HCT116 (cell line): ENCODE measurements at regions of chr20 and their contacts with region 1.

Region 1: GRCh38 chr20:33992923-33993575 is 662 bp upstream of the RALY start:
- DNase-seq: peak; percentile 95
- ATAC-seq: peak; percentile 82
- H3K4me3 ChIP-seq: peak overlapping the region; percentile 76 to 91
- H3K27ac ChIP-seq: peak overlapping the region; percentile 92
- H3K4me1 ChIP-seq: peaks cover 11 to 27% of the 10 kb centered on the region in 2 experiments
- H3K27me3 ChIP-seq: no peaks in the 10 kb centered on the region
- CTCF ChIP-seq: no peak
- POLR2A ChIP-seq: peak; percentile 87
- RAD21 ChIP-seq: no peak

Region 2: DNA sequence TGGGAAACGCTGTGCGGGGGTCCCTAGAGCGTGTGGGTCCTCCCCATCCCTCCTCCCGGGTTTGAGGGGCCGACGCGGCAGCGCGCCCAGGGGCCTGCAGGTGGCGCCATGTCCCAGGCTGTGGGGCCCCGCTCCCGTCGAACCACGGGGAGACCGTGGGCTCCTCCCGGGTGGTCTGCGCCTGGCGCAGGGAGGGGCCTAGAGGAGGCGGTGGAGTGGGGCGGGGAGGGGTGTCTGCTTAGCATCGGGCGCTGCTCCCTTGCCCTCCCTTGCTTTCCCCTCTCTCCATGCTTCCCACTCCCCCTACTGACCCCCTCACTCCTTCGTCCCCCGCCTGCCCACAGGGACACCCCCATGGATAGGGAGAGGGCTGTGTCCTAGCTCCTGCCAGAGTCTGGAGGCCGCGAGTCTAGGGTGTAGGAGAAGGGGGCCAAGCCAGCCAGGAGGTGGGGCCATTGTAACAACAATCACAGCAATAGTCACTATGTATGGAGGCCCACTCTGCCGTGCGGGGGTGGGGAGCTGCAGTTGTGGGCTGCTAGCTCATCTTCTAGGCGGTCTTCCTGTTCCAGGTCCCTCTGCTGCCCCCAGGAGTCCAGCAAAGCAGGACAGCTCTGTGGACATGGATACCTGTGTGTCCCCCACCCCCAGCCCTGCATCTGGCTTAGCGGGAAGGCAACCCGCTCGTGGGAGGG is 130.2 kb before region 1 on chr20:
- CTCF ChIA-PET with region 1: no interaction called
- POLR2A ChIA-PET with region 1: no interaction called
- RAD21 ChIA-PET with region 1: no interaction called
- intact Hi-C with region 1: loop called (anchors 1 kb)
- DNase-seq: no peak
- ATAC-seq: peak; percentile 84
- H3K4me3 ChIP-seq: no peak overlapping the region
- H3K27ac ChIP-seq: no peak overlapping the region
- H3K4me1 ChIP-seq: peaks cover 0 to 12% of the 10 kb centered on the region in 2 experiments; a peak in 1 of 4 replicates
- H3K27me3 ChIP-seq: no peaks in the 10 kb centered on the region
- CTCF ChIP-seq: peak; percentile 43 to 95 (median 82); a peak in 5 of 6 replicates
- POLR2A ChIP-seq: no peak
- RAD21 ChIP-seq: peak; percentile 69

Region 3: DNA sequence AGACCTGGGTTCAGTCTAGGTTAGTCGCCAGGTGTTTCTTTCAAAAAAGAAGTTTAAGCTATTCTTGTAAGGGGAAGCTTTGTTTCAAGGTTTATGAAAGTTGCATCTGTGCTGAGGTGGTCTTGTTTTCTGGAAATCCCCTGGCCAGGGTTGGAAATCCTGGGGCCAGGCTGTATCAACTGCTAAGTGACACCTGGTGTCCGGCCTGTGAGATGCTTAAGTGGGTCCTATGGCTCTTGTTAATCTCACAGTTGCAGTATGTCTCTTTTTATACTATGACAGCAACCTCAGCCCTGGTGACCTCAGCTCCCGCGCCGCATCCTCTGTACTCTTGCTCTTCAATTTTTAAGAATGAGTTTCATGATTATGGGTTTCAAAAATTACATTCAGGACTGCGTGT is 109.9 kb before region 1 on chr20:
- CTCF ChIA-PET with region 1: no interaction called
- POLR2A ChIA-PET with region 1: no interaction called
- RAD21 ChIA-PET with region 1: no interaction called
- intact Hi-C with region 1: no loop called
- DNase-seq: no peak
- ATAC-seq: no peak
- H3K4me3 ChIP-seq: no peak overlapping the region
- H3K27ac ChIP-seq: no peak overlapping the region
- H3K4me1 ChIP-seq: no peaks in the 10 kb centered on the region
- H3K27me3 ChIP-seq: no peaks in the 10 kb centered on the region
- CTCF ChIP-seq: no peak
- POLR2A ChIP-seq: no peak
- RAD21 ChIP-seq: no peak